ENCODE measurements at regions of chr19 and their contacts with region 1.

Region 1: GRCh38 chr19:35140962-35141637 is 2.0 kb upstream of the FXYD7 start:
- DNase-seq: peak; percentile 90
- H3K4me3 Mint-ChIP-seq: peak overlapping the region; percentile 82
- H3K27ac Mint-ChIP-seq: peak overlapping the region; percentile 79
- H3K4me1 Mint-ChIP-seq: peaks cover 25% of the 10 kb centered on the region
- H3K27me3 Mint-ChIP-seq: peaks cover 14% of the 10 kb centered on the region

Region 2: DNA sequence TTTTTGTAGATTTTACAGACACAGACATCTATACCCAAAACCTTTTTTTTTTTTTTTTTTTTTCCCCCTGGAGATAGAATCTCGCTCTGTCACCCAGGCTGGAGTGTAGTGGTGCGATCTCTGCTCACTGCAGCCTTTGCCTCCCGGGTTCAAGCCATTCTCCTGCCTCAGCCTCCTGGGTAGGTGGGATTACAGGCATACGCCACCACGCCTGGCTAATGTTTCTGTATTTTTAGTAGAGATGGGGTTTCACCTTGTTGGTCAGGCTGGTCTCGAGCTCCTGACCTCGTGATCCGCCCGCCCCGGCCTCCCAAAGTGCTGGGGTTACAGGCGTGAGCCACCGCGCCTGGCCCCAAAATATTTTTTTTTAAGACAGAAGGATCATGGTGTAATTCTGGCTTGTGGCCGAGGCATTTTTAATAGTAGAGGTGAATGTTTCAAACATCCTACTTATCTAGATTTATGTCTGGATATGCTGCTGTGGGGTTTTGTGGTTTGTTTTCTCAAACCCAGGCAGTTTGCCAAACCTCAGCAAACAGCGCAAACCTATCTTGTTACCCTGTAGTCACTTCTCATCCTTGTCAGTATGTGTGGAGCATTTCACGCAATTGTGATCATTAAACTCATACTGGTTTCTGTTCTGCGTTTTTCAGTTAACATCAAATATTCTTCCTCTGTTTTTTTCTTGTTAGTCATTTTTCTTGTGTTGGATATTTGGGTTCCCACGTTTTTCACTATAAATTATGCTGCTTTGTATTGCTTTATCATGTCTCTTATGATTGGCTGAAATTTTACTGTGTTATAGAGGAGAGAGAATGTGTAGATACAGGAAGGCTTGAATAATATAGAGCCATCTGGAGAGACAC is 922.9 kb before region 1 on chr19:
- intact Hi-C with region 1: no loop called
- DNase-seq: peak; percentile 44
- H3K4me3 Mint-ChIP-seq: peak overlapping the region; percentile 61
- H3K27ac Mint-ChIP-seq: peak overlapping the region; percentile 53
- H3K4me1 Mint-ChIP-seq: peaks cover 30% of the 10 kb centered on the region
- H3K27me3 Mint-ChIP-seq: no peaks in the 10 kb centered on the region

Region 3: GRCh38 chr19:35066691-35067563 is 74.2 kb before region 1 on chr19:
- intact Hi-C with region 1: loop called (anchors 1 kb)
- DNase-seq: peak; percentile 79
- H3K4me3 Mint-ChIP-seq: peak overlapping the region; percentile 42
- H3K27ac Mint-ChIP-seq: peak overlapping the region; percentile 57
- H3K4me1 Mint-ChIP-seq: peaks cover 16% of the 10 kb centered on the region
- H3K27me3 Mint-ChIP-seq: peaks cover 6% of the 10 kb centered on the region

Region 4: DNA sequence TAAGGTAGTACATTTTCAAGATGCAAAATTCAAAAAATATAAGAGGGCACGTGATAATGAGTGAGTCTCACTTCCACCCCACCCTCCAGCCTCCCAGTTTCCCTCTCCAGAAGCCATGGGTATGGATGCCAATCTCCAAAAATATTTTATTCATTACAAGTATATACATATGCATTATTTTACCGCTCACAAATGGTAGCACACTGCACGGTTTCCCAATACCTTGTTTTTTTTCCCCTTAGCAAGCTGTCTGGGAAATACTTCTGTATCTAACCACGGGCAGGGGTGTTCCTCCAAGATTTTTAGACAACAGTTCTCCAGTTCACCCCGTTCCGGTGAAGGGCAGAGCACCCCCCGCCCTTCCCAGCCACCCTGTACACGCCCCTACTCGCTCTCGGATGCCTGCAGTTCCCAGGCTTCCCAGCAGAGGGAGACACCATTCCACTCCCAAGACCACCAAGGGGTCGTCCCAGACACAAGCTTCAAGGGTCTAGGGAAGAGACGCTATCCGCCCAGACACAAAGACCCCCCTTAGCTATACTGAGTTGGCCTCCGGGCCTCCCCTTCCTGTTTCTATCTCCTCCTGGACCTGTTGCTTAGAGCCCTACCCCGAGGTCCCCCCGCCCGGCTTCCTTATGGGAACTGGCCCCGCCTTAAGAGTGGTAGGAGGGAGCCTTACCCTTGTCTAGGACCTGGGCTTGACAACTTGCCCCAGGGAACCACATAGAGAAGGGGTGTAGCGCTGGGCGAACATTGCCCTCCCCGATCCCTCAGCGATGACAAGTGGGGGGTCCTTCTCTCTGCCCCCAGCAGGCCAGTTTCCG is 26.5 kb before region 1 on chr19:
- intact Hi-C with region 1: loop called (anchors 2 kb)
- DNase-seq: peak; percentile 38
- H3K4me3 Mint-ChIP-seq: no peak overlapping the region
- H3K27ac Mint-ChIP-seq: no peak overlapping the region
- H3K4me1 Mint-ChIP-seq: peaks cover 6% of the 10 kb centered on the region
- H3K27me3 Mint-ChIP-seq: peaks cover 7% of the 10 kb centered on the region

Region 5: GRCh38 chr19:35124098-35125060 is 16.7 kb before region 1 on chr19:
- intact Hi-C with region 1: loop called (anchors 1 kb)
- DNase-seq: peak; percentile 86
- H3K4me3 Mint-ChIP-seq: peak overlapping the region; percentile 81
- H3K27ac Mint-ChIP-seq: peak overlapping the region; percentile 36
- H3K4me1 Mint-ChIP-seq: peaks cover 13% of the 10 kb centered on the region
- H3K27me3 Mint-ChIP-seq: peaks cover 5% of the 10 kb centered on the region

Region 6: GRCh38 chr19:35154525-35155406 is 13.7 kb after region 1 on chr19 and contains the start of gene FXYD5:
- intact Hi-C with region 1: loop called (anchors 1 kb)
- DNase-seq: peak; percentile 60
- H3K4me3 Mint-ChIP-seq: peak within 1 kb of the TSS; percentile 100
- H3K27ac Mint-ChIP-seq: peak within 1 kb of the TSS; percentile 100
- H3K4me1 Mint-ChIP-seq: peaks cover 54% of the 10 kb centered on the region
- H3K27me3 Mint-ChIP-seq: peaks cover 7% of the 10 kb centered on the region
- total RNA-seq, gene FXYD5: 299 and 309 TPM in 2 replicates

Region 7: DNA sequence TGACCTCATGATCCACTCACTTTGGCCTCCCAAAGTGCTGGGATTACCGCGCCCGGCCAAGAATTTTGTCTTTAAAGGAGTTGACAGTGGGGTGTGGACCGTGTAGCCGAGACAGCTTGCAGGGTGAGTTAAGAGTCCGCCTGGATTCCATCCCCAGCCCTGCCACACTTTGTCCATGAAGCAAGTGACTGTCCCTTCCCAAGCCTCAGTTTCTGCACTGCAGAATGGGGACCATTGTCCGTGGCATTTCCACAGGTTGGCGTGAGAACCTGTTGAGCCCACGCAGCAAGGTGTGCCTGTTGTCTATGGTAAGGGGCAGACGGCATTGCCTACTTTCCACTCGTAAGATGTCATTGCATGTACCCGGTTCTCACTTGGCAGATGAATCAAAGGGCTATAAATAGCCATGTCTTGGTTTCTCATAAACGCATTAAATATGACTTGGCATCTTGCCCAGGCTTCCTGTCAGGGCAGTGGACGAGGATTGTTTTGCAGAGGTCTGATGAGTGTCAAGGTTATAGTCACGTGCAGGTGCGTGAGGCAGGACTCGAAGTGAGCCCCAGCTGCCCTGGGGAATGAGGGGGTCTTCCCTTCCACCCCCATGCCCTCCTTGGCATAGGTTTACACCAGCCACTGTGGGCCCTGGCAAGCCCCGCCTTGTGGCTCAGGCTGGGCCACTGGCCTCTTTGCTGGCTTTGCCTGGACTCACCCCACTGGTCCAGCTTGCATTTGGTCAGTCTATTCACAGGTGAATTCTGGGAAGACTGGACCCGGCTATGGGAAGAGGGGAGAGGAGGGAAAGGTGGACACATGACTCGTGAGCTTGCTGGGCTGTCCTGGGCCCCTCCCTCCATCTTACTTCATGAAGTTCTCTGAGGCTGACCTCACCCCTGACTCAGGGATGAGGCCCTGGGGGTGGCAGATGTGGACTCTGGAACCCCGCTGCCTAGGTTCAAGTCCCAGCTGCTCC is 72.8 kb after region 1 on chr19:
- intact Hi-C with region 1: loop called (anchors 2 kb)
- DNase-seq: peak; percentile 42
- H3K4me3 Mint-ChIP-seq: peak overlapping the region; percentile 2
- H3K27ac Mint-ChIP-seq: peak overlapping the region; percentile 75
- H3K4me1 Mint-ChIP-seq: peaks cover 57% of the 10 kb centered on the region
- H3K27me3 Mint-ChIP-seq: no peaks in the 10 kb centered on the region

Region 8: GRCh38 chr19:35347171-35347929 is 206.2 kb after region 1 on chr19 and contains the start of gene FFAR1:
- intact Hi-C with region 1: loop called (anchors 5 kb)
- DNase-seq: peak; percentile 42
- H3K4me3 Mint-ChIP-seq: peak within 1 kb of the TSS; percentile 74
- H3K27ac Mint-ChIP-seq: peak within 1 kb of the TSS; percentile 99
- H3K4me1 Mint-ChIP-seq: peaks cover 37% of the 10 kb centered on the region
- H3K27me3 Mint-ChIP-seq: peaks cover 4% of the 10 kb centered on the region
- total RNA-seq, gene FFAR1: 0.12 and 0.18 TPM in 2 replicates

Measured in activated T-helper 1 cell treated with anti-CD3 and anti-CD28 coated beads, Interleukin-12 subunit alpha, Interleukin-12 subunit beta, Interleukin-2, Interleukin-4 antibody, amounts not matched to agents 30 ng/mL and 10 ng/mL and 1 ng/mL, durations not matched to agents 14 hours and 24 hours and 36 hours (primary cell).